PC-3 (cell line): ENCODE measurements at regions of chr11 and their contacts with region 1.

Region 1: GRCh38 chr11:44992181-44992582 is 41.5 kb upstream of the TP53I11 start:
- DNase-seq: no peak
- ATAC-seq: no peak
- H3K4me3 ChIP-seq: no peak overlapping the region
- H3K27ac ChIP-seq: no peak overlapping the region
- H3K4me1 ChIP-seq: no peaks in the 10 kb centered on the region
- H3K27me3 ChIP-seq: no peaks in the 10 kb centered on the region
- CTCF ChIP-seq: no peak

Region 2: DNA sequence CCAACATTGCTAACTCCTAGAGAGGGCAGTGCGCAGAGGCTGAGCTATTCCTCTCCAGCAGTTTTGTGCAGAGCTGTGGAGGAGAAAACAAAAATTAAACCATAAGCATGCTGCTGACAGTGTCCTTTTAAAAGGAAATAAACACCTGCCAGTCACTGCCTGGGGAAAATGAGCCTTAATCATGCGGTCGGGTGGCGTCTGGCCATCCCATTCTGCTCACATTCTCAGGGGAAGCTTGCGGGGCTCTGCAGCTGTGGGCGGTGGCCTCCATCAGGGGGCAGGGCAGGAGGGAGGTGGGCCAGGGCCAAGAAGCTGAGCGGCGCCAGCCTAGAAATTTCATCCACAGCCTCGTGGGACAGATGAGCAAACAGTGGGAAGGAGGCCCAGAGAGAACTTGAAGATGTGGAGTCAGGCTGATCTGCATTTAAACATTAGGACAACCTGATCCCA is 29.5 kb after region 1 on chr11:
- CTCF ChIA-PET with region 1: no interaction called
- POLR2A ChIA-PET with region 1: no interaction called
- intact Hi-C with region 1: no loop called
- DNase-seq: no peak
- ATAC-seq: no peak
- H3K4me3 ChIP-seq: no peak overlapping the region
- H3K27ac ChIP-seq: no peak overlapping the region
- H3K4me1 ChIP-seq: no peaks in the 10 kb centered on the region
- H3K27me3 ChIP-seq: no peaks in the 10 kb centered on the region
- CTCF ChIP-seq: no peak

Region 3: DNA sequence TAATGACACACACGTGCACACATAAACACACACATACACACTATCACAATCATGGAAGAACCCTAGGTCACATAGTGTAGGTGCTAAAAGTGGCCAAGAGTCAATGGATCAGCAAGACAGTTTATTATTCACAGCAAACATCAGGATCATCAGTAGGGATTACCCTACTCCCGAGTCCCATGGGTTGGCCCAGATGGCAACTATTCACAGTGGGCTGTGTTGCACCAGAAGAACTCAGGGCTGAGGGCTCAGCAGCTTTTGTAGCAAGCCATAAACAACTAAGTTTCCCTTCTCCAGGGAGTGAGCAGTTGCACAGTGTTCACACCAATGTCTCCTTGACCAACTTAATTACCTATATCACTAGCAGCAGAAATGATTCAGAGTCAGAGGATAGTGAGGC is 175.1 kb after region 1 on chr11:
- CTCF ChIA-PET with region 1: no interaction called
- POLR2A ChIA-PET with region 1: interaction called, 27 read pairs
- intact Hi-C with region 1: no loop called
- DNase-seq: no peak
- ATAC-seq: no peak
- H3K4me3 ChIP-seq: no peak overlapping the region
- H3K27ac ChIP-seq: no peak overlapping the region
- H3K4me1 ChIP-seq: no peaks in the 10 kb centered on the region
- H3K27me3 ChIP-seq: no peaks in the 10 kb centered on the region
- CTCF ChIP-seq: no peak